CD14-positive monocyte (primary cell): ENCODE measurements at regions of chr4 and their contacts with region 1.

Region 1: GRCh38 chr4:73704314-73705055 is 35.9 kb upstream of the CXCL8 start:
- DNase-seq: peak; percentile 96 to 100 (median 99)
- H3K4me3 ChIP-seq: no peak overlapping the region
- H3K4me3 Mint-ChIP-seq: peak overlapping the region in 1 of 2 donors; percentile 56
- H3K27ac ChIP-seq: peak overlapping the region in 1 of 2 donors; percentile 64
- H3K27ac Mint-ChIP-seq: peak overlapping the region; percentile 89 to 97 (median 95)
- H3K4me1 ChIP-seq: peaks cover 47 to 64% of the 10 kb centered on the region in 2 donors
- H3K4me1 Mint-ChIP-seq: peaks cover 65% of the 10 kb centered on the region
- H3K27me3 ChIP-seq: no peaks in the 10 kb centered on the region
- H3K27me3 Mint-ChIP-seq: peaks cover 0 to 3% (median 0%) of the 10 kb centered on the region in 3 donors
- CTCF ChIP-seq: no peak

Region 2: GRCh38 chr4:72767618-72768302 is 936.7 kb before region 1 on chr4:
- intact Hi-C with region 1: no loop called
- DNase-seq: no peak
- H3K4me3 ChIP-seq: no peak overlapping the region
- H3K4me3 Mint-ChIP-seq: no peak overlapping the region
- H3K27ac ChIP-seq: no peak overlapping the region
- H3K27ac Mint-ChIP-seq: no peak overlapping the region
- H3K4me1 ChIP-seq: no peaks in the 10 kb centered on the region
- H3K4me1 Mint-ChIP-seq: no peaks in the 10 kb centered on the region
- H3K27me3 ChIP-seq: no peaks in the 10 kb centered on the region
- H3K27me3 Mint-ChIP-seq: no peaks in the 10 kb centered on the region
- CTCF ChIP-seq: no peak

Region 3: GRCh38 chr4:73740353-73740778 is 35.9 kb after region 1 on chr4 and contains the start of gene CXCL8:
- intact Hi-C with region 1: loop called in 1 of 2 experiments (anchors 5 kb)
- DNase-seq: peak; percentile 90 to 99 (median 93)
- H3K4me3 ChIP-seq: peak within 1 kb of the TSS; percentile 13 to 93 (median 75)
- H3K4me3 Mint-ChIP-seq: peak within 1 kb of the TSS; percentile 73 to 74
- H3K27ac ChIP-seq: peak within 1 kb of the TSS; percentile 47 to 86
- H3K27ac Mint-ChIP-seq: peak within 1 kb of the TSS; percentile 47 to 87 (median 76)
- H3K4me1 ChIP-seq: peaks cover 23 to 32% of the 10 kb centered on the region in 2 donors
- H3K4me1 Mint-ChIP-seq: peaks cover 25% of the 10 kb centered on the region
- H3K27me3 ChIP-seq: no peaks in the 10 kb centered on the region
- H3K27me3 Mint-ChIP-seq: peaks cover 0 to 2% (median 0%) of the 10 kb centered on the region in 3 donors
- CTCF ChIP-seq: no peak
- polyA plus RNA-seq, gene CXCL8: 275 to 604 (median 328) TPM